ENCODE measurements at regions of chr17 and their contacts with region 1.

Region 1: GRCh38 chr17:82551779-82552457 is 32.4 kb downstream of the FOXK2 start:
- DNase-seq: peak; percentile 70
- H3K4me3 ChIP-seq: no peak overlapping the region
- H3K27ac ChIP-seq: peak overlapping the region in 1 of 2 donors; percentile 4
- H3K4me1 ChIP-seq: peaks cover 6% of the 10 kb centered on the region
- H3K27me3 ChIP-seq: no peaks in the 10 kb centered on the region
- CTCF ChIP-seq: peak; percentile 53 to 84 (median 75)
- POLR2A ChIP-seq: no peak

Region 2: DNA sequence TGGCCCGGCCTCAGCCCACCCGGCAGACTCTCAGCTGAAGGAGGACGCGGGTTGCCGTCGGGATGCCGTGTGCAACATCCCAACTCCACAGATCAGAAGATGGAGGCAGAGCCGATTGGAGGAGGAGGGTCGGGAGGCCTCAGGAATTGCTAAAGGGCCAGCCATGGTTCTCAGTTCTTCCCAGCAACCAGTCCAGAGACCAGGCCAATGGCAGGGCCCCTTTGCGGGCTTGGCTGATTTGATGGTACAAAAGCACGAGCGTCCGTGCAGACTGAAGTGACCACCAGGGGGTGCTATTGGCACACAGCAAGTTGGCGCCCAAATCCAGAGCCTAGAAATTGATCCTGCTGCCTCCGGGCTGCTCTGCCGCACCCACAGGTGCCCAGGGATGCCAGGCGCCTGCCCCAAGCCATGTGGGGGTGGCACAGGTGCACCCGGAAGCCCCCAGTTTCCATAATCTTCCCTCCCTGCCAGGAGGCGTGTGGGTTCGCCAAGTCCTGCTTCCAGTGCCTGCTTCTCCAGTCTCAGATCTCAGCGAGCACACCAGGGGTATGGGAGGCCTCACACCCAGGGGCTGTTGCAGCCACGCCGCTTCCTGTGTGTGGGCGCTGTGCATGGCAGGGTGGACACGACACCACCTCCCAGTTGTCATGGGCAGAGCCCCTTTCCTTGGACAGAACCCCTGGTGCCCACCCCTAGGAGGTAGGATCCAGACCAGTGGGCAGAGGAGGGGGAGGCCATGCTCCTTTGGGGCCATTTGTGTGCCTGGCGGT is 200.0 kb before region 1 on chr17:
- intact Hi-C with region 1: loop called (anchors 5 kb)
- DNase-seq: peak; percentile 87
- H3K4me3 ChIP-seq: no peak overlapping the region
- H3K27ac ChIP-seq: no peak overlapping the region
- H3K4me1 ChIP-seq: no peaks in the 10 kb centered on the region
- H3K27me3 ChIP-seq: no peaks in the 10 kb centered on the region
- CTCF ChIP-seq: peak; percentile 94 to 100 (median 97)
- POLR2A ChIP-seq: no peak

Region 3: DNA sequence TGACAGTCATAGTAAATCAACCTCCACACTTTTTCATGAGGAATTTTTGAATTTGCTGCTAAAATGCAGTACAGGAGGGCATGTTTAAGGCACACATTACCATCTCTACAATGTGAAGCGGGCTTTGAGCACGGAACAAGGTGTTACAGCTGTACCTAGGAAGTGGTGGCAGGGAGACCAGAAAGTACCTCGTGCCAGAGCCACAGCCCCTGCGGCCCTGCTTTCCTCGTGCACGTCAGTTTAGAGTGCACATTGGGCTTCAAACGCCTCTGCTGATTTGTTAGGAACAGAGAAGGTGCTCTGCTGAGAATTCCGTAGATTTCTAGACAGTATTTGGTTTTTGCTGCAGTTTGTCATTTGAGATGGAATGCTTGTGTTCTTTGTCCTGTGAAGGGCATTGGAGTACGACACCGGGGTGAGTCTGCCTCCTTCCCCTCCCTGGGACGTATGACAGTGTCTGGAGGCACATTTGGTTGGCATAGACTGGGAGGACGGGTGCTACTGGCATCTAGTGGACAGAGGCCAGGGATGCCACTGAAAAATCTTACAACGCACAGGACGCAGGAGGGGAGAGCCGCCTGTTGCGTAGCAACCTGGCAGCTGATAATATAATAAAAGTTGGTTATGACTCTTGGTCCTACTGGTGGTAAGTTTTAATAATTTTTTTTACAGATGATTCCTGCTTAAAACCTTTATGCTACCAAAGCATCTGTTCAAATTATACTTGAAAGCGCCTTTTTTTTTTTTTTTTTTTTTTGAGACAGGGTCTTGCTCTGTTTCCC is 23.2 kb before region 1 on chr17:
- intact Hi-C with region 1: no loop called
- DNase-seq: peak; percentile 86
- H3K4me3 ChIP-seq: no peak overlapping the region
- H3K27ac ChIP-seq: peak overlapping the region; percentile 44 to 67
- H3K4me1 ChIP-seq: peaks cover 4% of the 10 kb centered on the region
- H3K27me3 ChIP-seq: no peaks in the 10 kb centered on the region
- CTCF ChIP-seq: peak in 3 of 4 experiments; percentile 45 to 69 (median 64)
- POLR2A ChIP-seq: no peak

Measured in prostate gland (tissue), 2 donors.